Caco-2 (cell line): ENCODE measurements at regions of chr6 and their contacts with region 1.

Region 1: GRCh38 chr6:75546381-75546780 is 52.8 kb upstream of the FILIP1 start:
- DNase-seq: no peak
- H3K4me3 ChIP-seq: no peak overlapping the region
- H3K4me3 Mint-ChIP-seq: no peak overlapping the region
- H3K27ac Mint-ChIP-seq: no peak overlapping the region
- H3K4me1 ChIP-seq: no peaks in the 10 kb centered on the region
- H3K4me1 Mint-ChIP-seq: no peaks in the 10 kb centered on the region
- H3K27me3 ChIP-seq: no peaks in the 10 kb centered on the region
- H3K27me3 Mint-ChIP-seq: no peaks in the 10 kb centered on the region
- CTCF ChIP-seq: no peak

Region 2: GRCh38 chr6:75368151-75368779 is 178.1 kb before region 1 on chr6:
- CTCF ChIA-PET with region 1: interaction called, 8 read pairs
- POLR2A ChIA-PET with region 1: no interaction called
- intact Hi-C with region 1: loop called (anchors 1 kb)
- DNase-seq: peak; percentile 50 to 65
- H3K4me3 ChIP-seq: no peak overlapping the region
- H3K4me3 Mint-ChIP-seq: no peak overlapping the region
- H3K27ac Mint-ChIP-seq: no peak overlapping the region
- H3K4me1 ChIP-seq: no peaks in the 10 kb centered on the region; the same call in 1 of the 2 replicates
- H3K4me1 Mint-ChIP-seq: no peaks in the 10 kb centered on the region
- H3K27me3 ChIP-seq: no peaks in the 10 kb centered on the region
- H3K27me3 Mint-ChIP-seq: peaks cover 3% of the 10 kb centered on the region
- CTCF ChIP-seq: peak; percentile 51 to 56

Region 3: DNA sequence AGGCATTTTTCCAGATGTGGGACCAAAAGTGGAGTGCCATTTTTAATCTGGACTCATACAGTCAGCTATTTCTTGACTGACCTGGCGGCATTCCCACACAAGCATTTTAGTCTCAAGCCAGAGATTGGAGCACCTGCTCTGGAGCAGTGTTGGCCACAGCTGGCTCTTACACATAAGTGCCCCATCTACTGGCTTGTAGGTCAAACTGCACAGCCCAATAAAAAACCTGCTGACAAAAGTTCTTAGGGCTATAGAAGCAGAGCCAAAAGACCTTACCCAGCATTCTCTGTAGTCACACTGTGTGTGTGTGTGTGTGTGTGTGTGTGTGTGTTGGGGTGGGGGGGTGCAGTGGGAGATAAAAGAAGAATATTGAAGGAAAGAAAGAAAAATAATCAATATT is 16.7 kb after region 1 on chr6:
- CTCF ChIA-PET with region 1: interaction called, 10 read pairs
- POLR2A ChIA-PET with region 1: no interaction called
- intact Hi-C with region 1: no loop called
- DNase-seq: peak in 1 of 2 experiments; percentile 46
- H3K4me3 ChIP-seq: no peak overlapping the region
- H3K4me3 Mint-ChIP-seq: no peak overlapping the region
- H3K27ac Mint-ChIP-seq: no peak overlapping the region
- H3K4me1 ChIP-seq: no peaks in the 10 kb centered on the region
- H3K4me1 Mint-ChIP-seq: no peaks in the 10 kb centered on the region
- H3K27me3 ChIP-seq: no peaks in the 10 kb centered on the region
- H3K27me3 Mint-ChIP-seq: peaks cover 3% of the 10 kb centered on the region
- CTCF ChIP-seq: peak; percentile 30 to 55